Dorsolateral prefrontal cortex (tissue), 120 donors: ENCODE measurements at regions of chr20 and their contacts with region 1.

Region 1: GRCh38 chr20:62500237-62500864 is 24.6 kb upstream of the GATA5 start:
- DNase-seq: peak in 9 of 10 donors; percentile 49 to 77 (median 66)
- H3K4me3 ChIP-seq: no peak overlapping the region
- H3K27ac ChIP-seq: no peak overlapping the region
- H3K27me3 ChIP-seq: peaks cover 0 to 18% (median 6%) of the 10 kb centered on the region in 45 donors
- CTCF ChIP-seq: peak; percentile 33 to 88 (median 78)

Region 2: GRCh38 chr20:62616728-62617621 is 116.6 kb after region 1 on chr20:
- intact Hi-C with region 1: loop called (anchors 2 to 5 kb)
- DNase-seq: peak in 9 of 10 donors; percentile 42 to 79 (median 64)
- H3K4me3 ChIP-seq: no peak overlapping the region
- H3K27ac ChIP-seq: peak overlapping the region in 30 of 59 donors; percentile 9 to 75 (median 48)
- H3K27me3 ChIP-seq: peaks cover 0 to 7% (median 0%) of the 10 kb centered on the region in 45 donors
- CTCF ChIP-seq: peak; percentile 55 to 90 (median 82)

Region 3: GRCh38 chr20:62662422-62662821 is 162.1 kb after region 1 on chr20:
- intact Hi-C with region 1: no loop called
- DNase-seq: no peak
- H3K4me3 ChIP-seq: no peak overlapping the region
- H3K27ac ChIP-seq: no peak overlapping the region
- H3K27me3 ChIP-seq: no peaks in the 10 kb centered on the region
- CTCF ChIP-seq: no peak

Region 4: DNA sequence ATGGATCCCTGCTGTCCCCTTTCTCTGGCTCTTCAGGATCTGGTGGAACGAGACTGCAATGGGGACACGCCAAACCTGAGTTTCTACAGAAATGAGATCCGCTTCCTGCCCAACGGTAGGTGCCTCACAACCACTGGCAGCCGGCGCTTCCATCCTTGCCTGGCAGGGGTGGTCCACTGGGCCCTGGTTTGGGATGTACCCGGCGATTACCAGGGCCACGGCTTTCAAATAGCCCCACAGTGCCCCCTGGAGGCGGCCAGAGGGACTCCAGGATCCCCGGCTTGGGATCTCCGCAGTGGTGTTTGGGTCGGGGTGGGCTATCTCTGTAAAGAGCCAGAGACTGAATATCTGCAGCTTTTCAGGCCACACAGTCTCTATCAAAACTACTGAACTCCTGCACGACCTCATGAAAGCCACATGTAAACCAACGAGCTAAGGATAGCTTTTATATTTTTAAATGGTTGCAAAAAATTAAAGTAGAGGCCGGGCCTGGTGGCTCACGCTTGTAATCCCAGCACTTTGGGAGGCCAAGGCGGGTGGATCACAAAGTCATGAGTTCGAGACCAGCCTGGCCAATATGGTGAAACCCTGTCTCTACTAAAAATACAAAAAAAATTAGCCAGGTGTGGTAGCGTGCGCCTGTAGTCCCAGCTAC is 308.0 kb after region 1 on chr20:
- intact Hi-C with region 1: loop called in 1 of 2 experiments (anchors 5 kb)
- DNase-seq: peak in 9 of 10 donors; percentile 75 to 85 (median 81)
- H3K4me3 ChIP-seq: peak overlapping the region in 11 of 59 donors; percentile 5 to 22 (median 12)
- H3K27ac ChIP-seq: peak overlapping the region in 39 of 59 donors; percentile 1 to 73 (median 44)
- H3K27me3 ChIP-seq: no peaks in the 10 kb centered on the region
- CTCF ChIP-seq: peak; percentile 69 to 96 (median 93)

Region 5: GRCh38 chr20:62818592-62819493 is 318.5 kb after region 1 on chr20:
- intact Hi-C with region 1: no loop called
- DNase-seq: peak in 9 of 10 donors; percentile 40 to 79 (median 69)
- H3K4me3 ChIP-seq: peak overlapping the region in 37 of 59 donors; percentile 3 to 72 (median 57)
- H3K27ac ChIP-seq: peak overlapping the region; percentile 47 to 99 (median 94)
- H3K27me3 ChIP-seq: peaks cover 0 to 5% (median 0%) of the 10 kb centered on the region in 45 donors
- CTCF ChIP-seq: no peak